ENCODE measurements at regions of chr10 and their contacts with region 1.

Region 1: GRCh38 chr10:101012525-101013364 is 13.1 kb downstream of the LZTS2 start:
- DNase-seq: peak; percentile 92
- H3K4me3 ChIP-seq: no peak overlapping the region
- H3K27ac ChIP-seq: peak overlapping the region in 3 of 4 donors; percentile 32 to 54 (median 33)
- H3K4me1 ChIP-seq: peaks cover 0 to 29% (median 17%) of the 10 kb centered on the region in 4 donors
- H3K27me3 ChIP-seq: peaks cover 16% of the 10 kb centered on the region
- CTCF ChIP-seq: peak; percentile 80 to 97 (median 84)
- EP300 ChIP-seq: no peak
- POLR2A ChIP-seq: no peak

Region 2: DNA sequence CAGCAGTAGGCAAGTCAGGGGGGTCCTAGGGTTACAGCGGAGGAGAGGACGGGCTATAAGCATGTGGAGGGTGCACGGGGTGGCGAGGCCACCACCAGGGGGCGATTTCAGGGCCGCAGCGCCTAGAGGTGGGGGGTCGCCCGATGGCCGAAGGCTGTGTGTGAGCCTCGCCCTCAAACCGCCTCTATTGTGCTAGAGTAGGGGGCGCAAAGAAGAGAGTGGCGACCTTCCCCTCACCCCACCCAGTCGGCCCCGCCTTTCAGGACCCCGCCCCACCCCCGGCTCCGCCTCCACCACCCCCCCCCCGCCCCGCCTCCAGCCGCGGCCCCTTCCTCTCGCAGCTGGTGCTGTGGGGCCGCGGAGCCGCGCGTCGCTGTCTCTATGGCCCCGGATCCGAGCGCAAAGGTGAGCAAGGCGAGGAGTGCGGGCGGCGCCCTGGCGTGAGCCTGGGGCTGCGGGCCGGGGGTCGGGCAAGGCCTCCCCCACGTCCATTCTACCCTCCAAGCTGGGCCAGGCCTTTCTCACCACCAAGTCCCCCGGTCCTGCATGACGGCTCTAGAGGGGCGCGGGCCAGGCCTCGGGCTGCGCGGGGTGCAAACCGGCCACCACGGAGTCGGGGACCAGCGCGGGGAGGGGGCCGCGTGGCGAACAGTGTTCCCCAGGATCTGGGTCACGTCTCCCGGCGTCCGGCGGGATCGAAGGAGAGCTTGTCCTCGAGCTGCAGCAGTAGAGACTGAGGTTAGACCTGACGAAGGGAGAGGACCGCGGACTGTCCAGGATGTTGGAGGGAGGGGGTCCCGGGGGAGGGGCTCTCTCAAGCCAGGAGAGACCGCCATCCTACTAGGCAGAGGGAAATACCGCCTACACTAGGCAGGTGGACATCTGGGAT is 43.3 kb before region 1 on chr10 and contains the start of gene SEMA4G:
- in situ Hi-C with region 1: no loop called
- intact Hi-C with region 1: loop called (anchors 10 kb)
- DNase-seq: peak; percentile 59
- H3K4me3 ChIP-seq: peak within 1 kb of the TSS; percentile 66 to 88 (median 81)
- H3K27ac ChIP-seq: peak within 1 kb of the TSS; percentile 81 to 91 (median 90)
- H3K4me1 ChIP-seq: peaks cover 8 to 47% (median 27%) of the 10 kb centered on the region in 4 donors
- H3K27me3 ChIP-seq: no peaks in the 10 kb centered on the region
- CTCF ChIP-seq: peak; percentile 75 to 90 (median 78)
- EP300 ChIP-seq: no peak
- POLR2A ChIP-seq: peak; percentile 33
- total RNA-seq, gene SEMA4G: 94.0 to 221 (median 121) TPM

Region 3: GRCh38 chr10:100993986-100994708 is 18.6 kb before region 1 on chr10:
- in situ Hi-C with region 1: no loop called
- intact Hi-C with region 1: loop called (anchors 1 kb)
- DNase-seq: no peak
- H3K4me3 ChIP-seq: no peak overlapping the region
- H3K27ac ChIP-seq: no peak overlapping the region
- H3K4me1 ChIP-seq: peaks cover 5 to 29% (median 18%) of the 10 kb centered on the region in 4 donors
- H3K27me3 ChIP-seq: no peaks in the 10 kb centered on the region
- CTCF ChIP-seq: peak; percentile 58 to 77 (median 67)
- EP300 ChIP-seq: no peak
- POLR2A ChIP-seq: no peak

Measured in transverse colon (tissue), 4 donors.